Posterior vena cava (tissue), 2 donors: ENCODE measurements at regions of chr5 and their contacts with region 1.

Region 1: GRCh38 chr5:73902327-73903051 is 276.5 kb downstream of the ARHGEF28 start:
- DNase-seq: no peak

Region 2: GRCh38 chr5:74640450-74640953 is 738.0 kb after region 1 on chr5 and contains the start of gene ENC1:
- intact Hi-C with region 1: loop called (anchors 1 to 5 kb)
- DNase-seq: peak; percentile 96
- total RNA-seq, gene ENC1: 12.4 to 12.7 TPM

Region 3: DNA sequence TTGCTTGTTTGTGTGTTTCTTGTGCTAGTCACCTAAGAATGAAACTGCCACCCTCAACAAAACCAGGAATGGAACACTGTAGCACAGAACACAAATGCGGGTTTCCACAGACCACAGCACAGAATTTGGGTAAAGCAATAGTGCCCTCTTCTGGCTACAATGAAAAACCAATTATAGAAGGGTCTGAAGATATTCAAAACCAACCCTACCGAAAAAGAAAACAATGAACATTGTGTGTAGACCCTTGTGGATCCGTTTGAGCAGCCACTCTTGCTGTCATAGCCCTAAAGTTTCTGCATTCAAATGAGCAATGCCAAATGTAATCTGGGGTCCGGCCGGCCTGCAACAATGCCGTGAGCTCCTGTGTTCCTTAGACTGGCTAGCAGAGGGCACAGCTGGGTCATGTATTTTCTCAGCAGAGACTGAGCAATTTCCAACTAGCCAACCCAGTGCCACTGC is 746.4 kb after region 1 on chr5:
- intact Hi-C with region 1: loop called (anchors 1 to 5 kb)
- DNase-seq: no peak